Gastrocnemius medialis (tissue), 4 donors: ENCODE measurements at regions of chr15 and their contacts with region 1.

Region 1: GRCh38 chr15:77543159-77543882 is 89.4 kb downstream of the LINGO1 start:
- DNase-seq: peak; percentile 48 to 70
- ATAC-seq: peak; percentile 88 to 92
- H3K4me3 ChIP-seq: peak overlapping the region; percentile 39 to 53 (median 50)
- H3K27ac ChIP-seq: peak overlapping the region; percentile 8 to 57 (median 26)
- H3K4me1 ChIP-seq: peaks cover 6 to 17% of the 10 kb centered on the region in 2 donors
- H3K27me3 ChIP-seq: no peaks in the 10 kb centered on the region
- CTCF ChIP-seq: peak; percentile 97 to 99 (median 98)
- POLR2A ChIP-seq: no peak

Region 2: DNA sequence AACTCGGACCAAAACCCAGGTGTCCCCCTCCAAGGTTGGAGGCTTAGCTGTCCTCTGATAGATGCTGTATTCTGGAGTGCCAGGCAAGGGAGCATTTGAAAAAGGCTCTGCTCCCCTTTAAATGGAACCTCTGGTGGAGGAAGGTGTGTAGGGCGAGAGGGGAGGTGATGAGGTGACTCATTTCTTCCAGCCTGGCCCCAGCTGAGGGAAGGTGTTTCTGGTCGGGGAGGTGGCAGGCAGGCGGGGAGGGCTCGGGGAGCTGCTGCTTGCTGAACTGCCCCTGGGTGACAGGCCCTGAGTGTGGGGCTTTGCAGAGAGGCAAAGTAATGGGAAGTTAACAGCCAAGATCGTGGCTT is 529.6 kb before region 1 on chr15:
- in situ Hi-C with region 1: loop called in 1 of 4 experiments (anchors 10 kb)
- intact Hi-C with region 1: no loop called
- DNase-seq: no peak
- ATAC-seq: no peak
- H3K4me3 ChIP-seq: no peak overlapping the region
- H3K27ac ChIP-seq: no peak overlapping the region
- H3K4me1 ChIP-seq: no peaks in the 10 kb centered on the region
- H3K27me3 ChIP-seq: no peaks in the 10 kb centered on the region
- CTCF ChIP-seq: no peak
- POLR2A ChIP-seq: no peak

Region 3: DNA sequence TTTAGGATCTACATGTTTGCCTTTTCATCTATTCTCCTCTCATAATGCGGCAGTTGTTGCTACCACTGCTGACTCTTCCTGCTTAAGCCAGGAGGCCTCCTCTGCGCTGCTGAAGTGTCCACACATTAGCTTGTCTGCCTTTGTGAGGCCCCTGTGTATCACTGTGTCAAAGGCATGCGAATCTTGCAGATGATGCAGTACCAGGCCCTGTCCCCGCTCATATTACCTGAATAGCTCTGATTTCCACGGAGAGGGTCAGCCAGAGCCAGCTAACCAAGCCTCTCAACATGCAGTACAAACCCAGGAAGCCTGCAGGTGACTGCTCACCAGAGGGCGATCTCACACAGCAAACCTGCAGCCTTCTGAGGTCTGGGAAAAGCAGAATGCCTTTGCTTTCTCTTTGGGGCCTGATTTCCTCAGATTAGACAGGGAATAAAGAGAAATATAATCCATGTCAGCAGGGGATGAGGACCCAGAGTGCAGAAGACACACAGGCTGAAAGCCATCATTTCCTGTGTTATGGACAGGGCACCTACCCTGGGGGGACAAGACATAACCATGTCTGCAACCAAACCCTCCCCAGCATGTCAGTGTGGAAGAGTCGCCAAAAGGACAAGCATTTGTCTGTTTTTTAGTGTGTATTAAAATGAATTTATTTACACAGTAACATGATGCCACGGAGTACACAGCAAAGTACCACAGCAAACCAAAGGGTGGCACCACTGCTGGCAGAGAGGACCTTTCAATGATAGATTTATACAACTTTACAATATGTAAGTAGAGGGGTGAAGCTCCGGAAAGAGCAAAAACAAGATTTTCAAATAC is 435.6 kb before region 1 on chr15:
- in situ Hi-C with region 1: loop called in 2 of 4 experiments (anchors 5 to 25 kb)
- intact Hi-C with region 1: loop called (anchors 1 kb)
- DNase-seq: peak; percentile 18 to 70
- ATAC-seq: peak; percentile 70 to 89
- H3K4me3 ChIP-seq: no peak overlapping the region
- H3K27ac ChIP-seq: peak overlapping the region in 2 of 4 donors; percentile 14 to 60
- H3K4me1 ChIP-seq: peaks cover 20 to 34% of the 10 kb centered on the region in 2 donors
- H3K27me3 ChIP-seq: no peaks in the 10 kb centered on the region
- CTCF ChIP-seq: peak; percentile 55 to 77 (median 67)
- POLR2A ChIP-seq: no peak

Region 4: DNA sequence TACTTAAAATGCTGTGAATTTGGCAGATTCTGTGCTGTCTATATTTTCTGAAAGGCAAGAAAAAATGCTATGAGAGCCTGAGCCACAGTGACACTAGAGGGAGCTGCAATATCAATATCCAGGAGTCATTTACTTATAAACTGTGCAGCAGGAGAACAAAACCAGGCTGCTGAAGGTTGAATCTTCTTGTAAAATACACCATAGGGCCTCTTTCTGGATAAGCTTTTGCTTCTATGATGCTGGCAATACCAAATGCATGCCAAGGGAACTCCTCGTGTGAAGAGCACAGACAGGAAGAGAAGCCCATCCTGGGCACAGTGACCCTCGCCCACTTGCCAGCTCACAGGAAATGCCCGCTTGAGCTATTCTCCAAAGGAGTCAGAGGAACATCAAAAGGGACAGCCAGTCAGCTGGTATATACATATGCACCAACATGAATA is 424.4 kb before region 1 on chr15:
- in situ Hi-C with region 1: loop called (anchors 5 to 25 kb)
- intact Hi-C with region 1: no loop called
- DNase-seq: no peak
- ATAC-seq: peak; percentile 50 to 60
- H3K4me3 ChIP-seq: no peak overlapping the region
- H3K27ac ChIP-seq: no peak overlapping the region
- H3K4me1 ChIP-seq: peaks cover 4 to 9% of the 10 kb centered on the region in 2 donors
- H3K27me3 ChIP-seq: no peaks in the 10 kb centered on the region
- CTCF ChIP-seq: peak; percentile 36 to 63 (median 54)
- POLR2A ChIP-seq: no peak

Region 5: DNA sequence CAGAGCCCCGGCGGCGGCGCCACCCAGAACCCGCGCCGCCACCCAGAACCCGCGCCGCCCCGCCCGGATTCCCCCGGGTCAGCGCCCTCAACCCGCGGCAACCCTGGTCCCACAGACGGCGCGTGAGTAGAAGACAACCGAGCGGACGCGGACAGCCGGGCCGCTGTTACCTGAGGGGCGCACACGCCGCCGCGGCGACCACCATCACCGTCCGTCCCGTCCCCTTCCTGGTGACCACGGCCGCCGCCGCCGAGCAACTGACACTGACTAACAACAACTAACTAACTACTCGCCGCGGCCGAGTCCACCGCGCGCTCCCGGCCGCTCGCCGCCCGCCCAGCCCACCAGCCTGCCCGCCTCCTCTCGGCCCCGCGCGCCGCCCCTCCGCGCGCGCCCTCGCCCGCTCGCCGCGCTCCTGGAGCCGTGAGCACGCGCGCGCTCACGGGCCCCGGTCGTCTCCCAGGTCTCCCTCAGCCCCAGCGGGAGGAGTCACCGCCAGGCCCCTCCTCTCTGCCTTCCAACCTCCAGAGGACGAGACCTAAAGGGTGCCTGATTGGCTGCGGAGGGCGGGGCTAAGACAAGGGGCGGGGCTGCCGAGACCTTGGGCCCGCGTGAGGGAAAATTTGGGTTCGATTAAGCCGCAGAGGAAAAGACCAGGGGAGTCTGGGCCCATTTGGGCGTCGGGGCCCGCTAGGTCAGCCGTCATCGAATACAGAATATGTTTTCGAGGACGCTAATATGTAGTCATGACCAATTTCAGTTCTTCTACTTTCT is 123.3 kb before region 1 on chr15 and contains the start of gene PEAK1:
- in situ Hi-C with region 1: no loop called
- intact Hi-C with region 1: loop called (anchors 5 kb)
- DNase-seq: peak; percentile 99 to 100
- ATAC-seq: peak; percentile 88 to 91
- H3K4me3 ChIP-seq: peak within 1 kb of the TSS; percentile 77 to 91 (median 84)
- H3K27ac ChIP-seq: peak within 1 kb of the TSS; percentile 87 to 98 (median 97)
- H3K4me1 ChIP-seq: peaks cover 52 to 69% of the 10 kb centered on the region in 2 donors
- H3K27me3 ChIP-seq: no peaks in the 10 kb centered on the region
- CTCF ChIP-seq: peak in 1 of 5 experiments; percentile 5
- POLR2A ChIP-seq: peak; percentile 96
- total RNA-seq, gene PEAK1: 17.8 to 21.9 (median 20.8) TPM